Posterior vena cava (tissue), 2 donors: ENCODE measurements at regions of chr1 and their contacts with region 1.

Region 1: DNA sequence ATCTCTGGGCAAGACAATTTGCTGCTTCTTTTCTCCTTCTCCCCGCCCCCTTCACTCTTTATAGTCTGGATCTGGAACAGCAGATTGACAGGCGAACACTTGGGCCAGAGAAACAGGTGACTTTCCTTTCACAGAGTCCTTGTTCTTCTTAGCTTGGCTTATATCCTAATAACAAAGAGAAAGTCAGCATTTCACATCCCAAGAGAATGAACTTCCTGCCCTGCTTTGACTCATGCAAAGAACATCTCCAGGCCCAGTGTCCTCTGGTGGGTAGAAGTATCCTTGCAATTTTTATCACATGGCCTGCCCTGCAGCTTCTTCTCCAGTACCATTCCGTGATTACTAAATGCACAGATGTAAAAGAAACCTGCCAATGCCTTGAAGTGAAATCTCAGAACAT is 764.4 kb downstream of the ADGRL2 start:
- DNase-seq: no peak

Region 2: DNA sequence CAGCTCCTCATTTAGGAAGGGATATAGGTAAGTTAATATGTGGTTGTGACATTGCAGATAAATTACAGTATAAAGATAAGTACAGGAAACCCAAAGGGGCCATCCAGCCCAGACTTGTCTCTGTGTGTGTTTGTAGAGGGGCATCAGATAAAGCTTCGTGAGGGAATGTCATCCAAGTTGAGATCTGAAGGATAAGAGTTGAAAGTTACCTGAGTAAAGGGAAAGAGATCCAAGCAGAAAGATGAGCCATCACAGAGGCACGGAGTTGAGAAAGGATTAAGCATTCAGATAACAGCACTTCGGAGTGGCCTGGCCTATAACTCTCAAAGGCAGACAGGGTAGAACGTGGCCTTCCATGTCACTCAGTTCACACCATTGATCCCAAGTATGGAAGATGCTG is 15.3 kb before region 1 on chr1:
- intact Hi-C with region 1: no loop called
- DNase-seq: no peak

Region 3: DNA sequence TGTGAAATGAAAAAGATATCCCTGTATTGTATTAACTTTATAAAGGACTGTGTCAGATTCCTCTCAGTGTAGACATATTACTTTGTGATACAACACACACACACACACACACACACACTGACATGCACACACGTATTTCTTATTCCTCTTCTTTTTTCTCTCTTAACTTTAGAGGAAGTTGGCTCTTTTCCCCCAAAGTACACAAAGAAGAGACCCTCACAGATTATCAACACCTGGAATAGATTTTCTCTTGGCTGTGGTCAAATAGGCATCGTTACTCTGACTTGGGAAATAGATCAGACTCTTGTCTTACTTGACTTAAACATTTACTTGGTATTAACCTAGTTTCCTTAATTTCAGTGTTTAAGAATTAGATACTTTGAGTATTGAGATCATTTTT is 28.4 kb after region 1 on chr1:
- intact Hi-C with region 1: loop called in 1 of 2 experiments (anchors 2 kb)
- DNase-seq: no peak